CD8-positive, alpha-beta T cell (primary cell): ENCODE measurements at regions of chr16 and their contacts with region 1.

Region 1: DNA sequence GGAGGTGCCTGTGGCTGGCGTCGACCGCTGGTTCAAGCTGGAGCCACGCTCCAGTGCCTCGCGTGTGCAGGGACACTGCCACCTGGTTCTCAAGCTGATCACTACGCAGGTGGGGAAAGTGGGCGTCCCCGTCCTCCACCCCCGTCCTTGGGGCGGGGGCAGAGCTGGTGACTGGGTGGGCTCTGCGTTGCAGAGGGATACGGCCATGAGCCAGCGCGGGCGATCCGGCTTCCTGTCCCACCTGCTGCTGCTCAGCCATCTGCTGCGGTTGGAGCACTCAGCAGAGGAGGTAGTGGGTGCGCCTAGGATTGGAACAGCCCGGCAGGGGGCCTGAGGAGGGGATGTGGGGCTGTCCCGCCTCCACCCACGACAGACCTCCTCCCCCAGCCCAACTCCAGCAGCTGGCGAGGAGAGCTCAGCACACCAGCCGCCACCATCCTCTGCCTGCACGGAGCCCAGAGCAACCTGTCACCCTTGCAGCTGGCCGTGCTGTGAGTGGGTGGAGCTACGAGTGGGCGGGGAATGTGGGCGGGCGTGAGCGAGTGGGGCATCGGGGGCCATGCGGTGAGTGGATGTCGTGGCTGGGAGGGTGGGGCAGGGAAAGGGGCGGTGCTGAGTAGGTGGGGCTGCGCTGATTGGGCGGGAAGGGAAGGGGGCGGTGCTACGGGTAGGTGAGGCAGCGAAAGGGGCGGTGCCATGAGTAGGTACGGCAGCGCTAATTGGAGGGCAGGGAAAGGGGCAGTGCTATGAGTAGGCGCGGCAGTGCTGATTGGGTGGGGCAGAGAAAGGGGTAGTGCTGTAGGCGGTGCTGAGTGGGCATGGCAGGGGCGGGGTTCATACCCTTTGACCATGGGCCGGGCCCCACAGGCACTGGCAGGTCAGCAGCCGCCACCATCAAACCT is 8.9 kb downstream of the TSR3 start:
- DNase-seq: peak; percentile 89 to 98 (median 96)
- ATAC-seq: peak; percentile 92
- H3K4me3 ChIP-seq: peak overlapping the region; percentile 45 to 70
- H3K4me3 Mint-ChIP-seq: peak overlapping the region; percentile 79
- H3K27ac ChIP-seq: peak overlapping the region in 1 of 2 experiments; percentile 18
- H3K27ac Mint-ChIP-seq: no peak overlapping the region
- H3K4me1 ChIP-seq: peaks cover 15% of the 10 kb centered on the region
- H3K4me1 Mint-ChIP-seq: peaks cover 18% of the 10 kb centered on the region
- H3K27me3 ChIP-seq: no peaks in the 10 kb centered on the region
- H3K27me3 Mint-ChIP-seq: no peaks in the 10 kb centered on the region
- CTCF ChIP-seq: no peak

Region 2: GRCh38 chr16:1300664-1301476 is 41.9 kb before region 1 on chr16:
- CTCF ChIA-PET with region 1: interaction called, 6 read pairs
- POLR2A ChIA-PET with region 1: no interaction called
- intact Hi-C with region 1: loop called in 1 of 2 experiments (anchors 2 kb)
- DNase-seq: peak; percentile 56 to 86 (median 75)
- ATAC-seq: peak; percentile 76
- H3K4me3 ChIP-seq: peak overlapping the region in 1 of 2 experiments; percentile 11
- H3K4me3 Mint-ChIP-seq: no peak overlapping the region
- H3K27ac ChIP-seq: no peak overlapping the region
- H3K27ac Mint-ChIP-seq: no peak overlapping the region
- H3K4me1 ChIP-seq: peaks cover 43% of the 10 kb centered on the region
- H3K4me1 Mint-ChIP-seq: peaks cover 16% of the 10 kb centered on the region
- H3K27me3 ChIP-seq: no peaks in the 10 kb centered on the region
- H3K27me3 Mint-ChIP-seq: peaks cover 10% of the 10 kb centered on the region
- CTCF ChIP-seq: peak; percentile 91

Region 3: DNA sequence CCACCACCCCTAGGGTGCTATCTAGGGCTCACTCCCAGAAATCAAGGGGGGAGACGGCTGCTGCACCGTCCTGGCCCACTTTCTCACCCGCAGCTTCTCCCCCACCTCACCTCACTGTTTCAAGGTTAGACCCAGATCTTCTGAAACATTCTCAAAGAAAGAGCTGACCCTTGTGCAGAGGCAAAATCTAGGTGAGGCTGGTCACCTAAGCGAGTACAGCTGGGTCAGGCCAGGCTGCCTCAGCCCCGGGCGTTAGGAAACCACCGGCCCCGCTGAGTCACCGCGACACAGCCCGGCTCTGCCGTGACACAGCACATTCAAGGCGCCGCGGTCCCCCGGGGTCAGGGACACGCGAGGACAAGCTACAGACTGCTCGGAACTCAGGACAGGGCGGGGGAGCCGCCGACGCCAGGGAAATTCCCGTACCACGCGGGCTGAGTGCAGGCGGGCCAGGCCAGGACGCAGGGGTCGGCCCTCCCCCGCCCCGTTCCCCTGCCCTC is 36.1 kb after region 1 on chr16:
- CTCF ChIA-PET with region 1: no interaction called
- POLR2A ChIA-PET with region 1: no interaction called
- intact Hi-C with region 1: loop called (anchors 2 to 5 kb)
- DNase-seq: peak in 6 of 9 experiments; percentile 19 to 85 (median 56)
- ATAC-seq: peak; percentile 59
- H3K4me3 ChIP-seq: no peak overlapping the region
- H3K4me3 Mint-ChIP-seq: peak overlapping the region; percentile 58
- H3K27ac ChIP-seq: no peak overlapping the region
- H3K27ac Mint-ChIP-seq: peak overlapping the region; percentile 64
- H3K4me1 ChIP-seq: peaks cover 17% of the 10 kb centered on the region
- H3K4me1 Mint-ChIP-seq: peaks cover 14% of the 10 kb centered on the region
- H3K27me3 ChIP-seq: no peaks in the 10 kb centered on the region
- H3K27me3 Mint-ChIP-seq: no peaks in the 10 kb centered on the region
- CTCF ChIP-seq: no peak